ENCODE measurements at regions of chr1 and their contacts with region 1.

Region 1: GRCh38 chr1:193377472-193377871 is 191.1 kb upstream of the B3GALT2 start:
- DNase-seq: no peak
- H3K4me3 ChIP-seq: no peak overlapping the region
- H3K27ac ChIP-seq: no peak overlapping the region
- H3K27me3 ChIP-seq: no peaks in the 10 kb centered on the region
- CTCF ChIP-seq: no peak

Region 2: DNA sequence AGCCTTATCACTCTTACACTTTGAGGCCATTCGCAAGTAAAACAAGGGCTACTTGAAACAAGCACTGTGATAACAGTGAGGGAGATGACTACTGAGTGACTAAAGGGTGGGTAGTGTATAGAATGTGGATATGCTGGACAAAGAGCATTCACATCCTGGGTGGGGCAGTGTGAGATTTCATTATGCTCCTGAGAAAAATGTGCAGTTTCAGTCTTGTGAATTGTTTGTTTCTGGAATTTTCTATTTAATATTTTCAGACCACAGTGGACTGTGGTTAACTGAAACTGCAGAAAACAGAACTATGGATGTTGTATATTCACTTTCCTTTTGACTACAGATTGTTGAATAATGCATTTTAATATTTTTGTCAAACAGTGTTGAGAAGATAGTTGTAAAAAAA is 165.9 kb before region 1 on chr1:
- intact Hi-C with region 1: no loop called
- DNase-seq: no peak
- H3K4me3 ChIP-seq: no peak overlapping the region
- H3K27ac ChIP-seq: no peak overlapping the region
- H3K27me3 ChIP-seq: no peaks in the 10 kb centered on the region
- CTCF ChIP-seq: no peak

Region 3: DNA sequence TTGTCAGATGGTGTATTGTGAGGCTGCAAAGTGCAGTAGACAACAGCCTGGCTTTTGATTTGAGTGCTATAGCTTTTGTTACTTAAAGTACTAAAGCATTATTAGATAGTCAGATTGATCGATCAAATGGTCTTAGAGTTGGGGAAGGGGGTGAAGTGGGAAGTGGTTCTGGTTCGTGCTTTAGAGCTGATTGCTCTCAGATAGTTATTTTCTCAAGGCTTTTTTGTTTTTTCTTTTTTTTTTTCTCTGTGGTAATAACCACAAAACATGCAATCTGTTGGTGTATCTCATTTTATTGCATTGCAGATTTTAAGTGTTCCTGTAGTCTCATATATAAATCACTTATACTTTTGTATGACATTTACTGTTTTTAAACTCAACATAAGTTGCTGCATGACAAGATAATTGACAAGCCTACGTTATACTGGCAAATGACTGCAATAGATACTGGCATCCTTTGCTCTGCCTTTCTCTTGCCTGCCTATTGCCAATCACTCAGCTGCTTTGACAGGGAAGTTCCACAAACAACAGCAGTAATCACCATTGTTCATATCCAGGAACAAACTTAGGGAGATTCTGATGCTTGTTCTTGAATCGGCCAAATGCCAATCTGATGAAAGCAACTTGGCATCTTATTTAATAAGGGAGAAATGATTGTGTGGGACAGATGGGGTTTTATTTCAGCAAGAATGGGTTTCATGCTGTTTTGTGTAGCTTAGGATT is 66.1 kb before region 1 on chr1:
- intact Hi-C with region 1: no loop called
- DNase-seq: no peak
- H3K4me3 ChIP-seq: no peak overlapping the region
- H3K27ac ChIP-seq: no peak overlapping the region
- H3K27me3 ChIP-seq: no peaks in the 10 kb centered on the region
- CTCF ChIP-seq: no peak

Region 4: GRCh38 chr1:193355179-193355578 is 22.3 kb before region 1 on chr1:
- intact Hi-C with region 1: loop called in 1 of 2 experiments (anchors 2 kb)
- DNase-seq: no peak
- H3K4me3 ChIP-seq: no peak overlapping the region
- H3K27ac ChIP-seq: no peak overlapping the region
- H3K27me3 ChIP-seq: no peaks in the 10 kb centered on the region
- CTCF ChIP-seq: no peak